Activated T-helper 2 cell treated with anti-CD3 and anti-CD28 coated beads, Interferon-gamma antibody, Interleukin-2, Interleukin-4, amounts not matched to agents 10 μg/mL and 5 μg/mL and 100 μg/mL, durations not matched to agents 14 hours and 24 hours and 36 hours (primary cell): ENCODE measurements at regions of chrX and their contacts with region 1.

Region 1: DNA sequence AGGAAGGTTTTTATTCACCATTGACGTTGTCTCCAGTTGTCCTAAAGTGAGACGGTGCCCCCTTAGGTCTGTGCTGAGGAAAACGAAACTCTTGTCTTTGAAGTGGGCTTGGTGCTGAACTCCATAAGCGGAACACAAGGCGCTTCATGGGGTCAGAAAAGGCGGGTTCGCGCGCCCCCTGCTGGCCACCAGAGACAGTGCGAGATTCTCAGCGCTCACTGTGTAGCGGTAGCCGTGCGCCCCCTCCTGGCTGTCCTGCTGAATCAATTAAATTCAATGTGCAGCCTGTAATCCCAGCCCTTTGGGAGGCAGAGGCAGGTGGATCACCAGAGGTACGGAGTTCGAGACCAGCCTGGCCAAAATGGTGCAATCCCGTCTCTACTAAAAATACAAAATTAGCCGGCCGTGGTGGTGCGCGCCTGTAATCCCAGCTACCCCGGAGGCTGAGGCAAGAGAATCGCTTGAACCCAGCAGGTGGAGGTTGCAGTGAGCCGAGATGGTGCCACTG is 64.1 kb downstream of the RLIM start:
- DNase-seq: peak; percentile 68
- H3K4me3 Mint-ChIP-seq: peak overlapping the region; percentile 39
- H3K27ac Mint-ChIP-seq: no peak overlapping the region
- H3K4me1 Mint-ChIP-seq: peaks cover 6% of the 10 kb centered on the region
- H3K27me3 Mint-ChIP-seq: no peaks in the 10 kb centered on the region

Region 2: DNA sequence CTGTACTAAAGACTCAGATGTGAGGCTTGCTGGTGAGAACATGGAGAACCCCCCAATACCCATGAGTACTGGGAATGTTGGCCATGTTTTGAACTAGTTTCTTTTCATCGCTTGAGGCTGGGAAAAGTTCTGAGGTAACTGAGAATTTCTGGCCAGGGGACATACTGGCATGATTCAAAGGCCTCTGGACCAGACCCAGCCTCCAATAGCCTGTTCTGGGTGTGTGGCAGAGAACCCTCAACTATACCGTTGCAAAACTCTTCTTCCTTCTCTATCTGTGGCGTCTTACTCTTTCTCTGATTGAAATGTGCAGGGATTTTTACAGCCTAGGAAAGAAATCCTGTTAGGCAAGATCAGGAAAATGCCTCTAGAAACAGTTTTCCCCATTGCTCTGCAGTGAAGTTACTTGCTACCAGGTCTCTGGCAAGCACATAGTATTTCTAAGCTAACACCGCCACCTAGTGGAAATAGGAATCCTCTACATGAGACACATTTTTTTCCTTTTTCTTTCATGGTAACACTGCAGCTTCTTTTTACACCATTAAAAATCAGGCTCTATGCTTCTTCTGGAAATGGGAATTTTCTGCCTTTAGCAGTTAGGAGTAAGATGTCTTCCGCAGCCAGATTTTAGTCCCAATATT is 417.1 kb before region 1 on chrX:
- intact Hi-C with region 1: loop called (anchors 10 kb)
- DNase-seq: no peak
- H3K4me3 Mint-ChIP-seq: no peak overlapping the region
- H3K27ac Mint-ChIP-seq: no peak overlapping the region
- H3K4me1 Mint-ChIP-seq: no peaks in the 10 kb centered on the region
- H3K27me3 Mint-ChIP-seq: no peaks in the 10 kb centered on the region

Region 3: GRCh38 chrX:74382613-74383012 is 167.7 kb before region 1 on chrX:
- intact Hi-C with region 1: loop called (anchors 1 kb)
- DNase-seq: peak; percentile 21
- H3K4me3 Mint-ChIP-seq: no peak overlapping the region
- H3K27ac Mint-ChIP-seq: no peak overlapping the region
- H3K4me1 Mint-ChIP-seq: peaks cover 2% of the 10 kb centered on the region
- H3K27me3 Mint-ChIP-seq: no peaks in the 10 kb centered on the region

Region 4: GRCh38 chrX:74492720-74493201 is 57.6 kb before region 1 on chrX:
- intact Hi-C with region 1: loop called (anchors 2 kb)
- DNase-seq: no peak
- H3K4me3 Mint-ChIP-seq: no peak overlapping the region
- H3K27ac Mint-ChIP-seq: no peak overlapping the region
- H3K4me1 Mint-ChIP-seq: no peaks in the 10 kb centered on the region
- H3K27me3 Mint-ChIP-seq: no peaks in the 10 kb centered on the region

Region 5: DNA sequence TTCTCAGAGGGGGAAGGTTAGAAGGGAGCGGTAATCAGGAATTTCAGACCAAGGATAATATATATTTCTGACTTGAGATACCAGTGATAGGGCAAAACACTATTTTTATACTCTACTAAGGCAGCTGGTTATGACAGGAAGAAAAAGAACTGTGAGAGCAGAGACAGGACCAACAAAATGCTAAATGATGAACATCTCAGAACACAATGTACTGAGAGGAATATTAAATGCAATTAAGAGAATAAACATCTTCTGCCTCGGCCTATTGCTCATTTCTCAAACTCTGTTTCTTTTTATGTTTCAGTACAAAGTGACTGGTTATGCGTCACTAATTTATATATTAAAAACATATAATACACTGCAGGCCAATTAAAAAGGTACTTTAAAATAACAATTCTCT is 186.1 kb after region 1 on chrX:
- intact Hi-C with region 1: no loop called
- DNase-seq: no peak
- H3K4me3 Mint-ChIP-seq: no peak overlapping the region
- H3K27ac Mint-ChIP-seq: no peak overlapping the region
- H3K4me1 Mint-ChIP-seq: no peaks in the 10 kb centered on the region
- H3K27me3 Mint-ChIP-seq: no peaks in the 10 kb centered on the region

Region 6: DNA sequence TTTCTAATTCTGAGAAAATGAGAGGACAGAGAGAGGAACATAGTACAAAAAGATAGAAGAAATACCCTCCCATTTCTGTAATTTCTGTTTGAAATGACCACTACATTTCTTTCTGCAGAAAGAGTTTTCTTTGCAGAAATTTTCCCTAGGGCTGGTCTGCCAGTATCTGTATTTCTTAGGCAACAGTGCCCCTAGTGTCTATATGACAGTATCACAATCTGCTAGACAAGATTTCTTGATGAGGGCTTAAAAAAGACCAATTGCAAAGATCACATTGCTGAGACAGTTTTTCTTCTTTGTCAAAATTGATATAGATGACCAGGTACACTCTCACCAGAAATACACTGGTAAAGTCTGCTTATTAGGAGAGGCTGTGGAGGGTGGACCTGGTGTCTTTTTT is 1053.5 kb after region 1 on chrX:
- intact Hi-C with region 1: loop called (anchors 10 kb)
- DNase-seq: no peak
- H3K4me3 Mint-ChIP-seq: no peak overlapping the region
- H3K27ac Mint-ChIP-seq: no peak overlapping the region
- H3K4me1 Mint-ChIP-seq: no peaks in the 10 kb centered on the region
- H3K27me3 Mint-ChIP-seq: no peaks in the 10 kb centered on the region